ENCODE measurements at regions of chr17 and their contacts with region 1.

Region 1: GRCh38 chr17:27578718-27579085 is 52.3 kb upstream of the LGALS9 start:
- DNase-seq: peak in 1 of 2 donors; percentile 65
- ATAC-seq: peak; percentile 18 to 24
- H3K4me3 ChIP-seq: peak overlapping the region in 2 of 4 donors; percentile 4 to 37
- H3K27ac ChIP-seq: peak overlapping the region; percentile 88 to 99 (median 96)
- H3K4me1 ChIP-seq: peaks cover 41 to 73% of the 10 kb centered on the region in 2 donors
- H3K27me3 ChIP-seq: no peaks in the 10 kb centered on the region
- CTCF ChIP-seq: no peak
- POLR2A ChIP-seq: no peak

Region 2: DNA sequence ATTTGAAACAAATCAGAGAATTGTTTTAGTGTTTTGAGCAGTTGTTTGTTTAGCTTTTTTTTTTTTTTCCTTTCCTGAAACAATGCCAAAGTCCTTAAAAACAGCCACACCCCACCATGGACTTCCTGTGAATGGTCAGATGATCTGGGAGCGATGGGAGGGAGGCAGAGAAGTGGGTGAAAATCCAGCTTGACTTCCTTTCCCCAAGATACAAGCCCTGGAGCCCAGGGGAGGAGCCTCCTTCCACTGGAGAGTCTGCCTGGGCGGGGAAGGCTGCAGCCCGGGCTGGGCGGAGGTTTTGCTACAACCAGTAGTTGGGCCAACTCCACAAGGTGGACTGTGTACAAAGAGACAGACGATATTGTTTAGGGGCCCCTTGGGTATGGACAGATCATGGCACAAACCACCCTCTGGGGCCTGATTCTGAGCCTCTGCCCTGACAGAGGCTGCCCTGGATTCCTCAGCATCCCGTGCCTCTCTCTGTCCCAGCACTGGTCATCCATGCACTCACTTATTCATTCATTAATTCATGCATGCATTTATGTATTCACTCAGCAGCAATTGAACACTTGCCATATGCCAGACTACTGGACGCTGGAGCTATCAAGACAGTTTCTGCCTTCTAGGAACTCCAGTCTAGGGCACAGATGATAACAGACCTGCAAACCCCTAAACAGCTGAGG is 255.0 kb before region 1 on chr17:
- in situ Hi-C with region 1: no loop called
- intact Hi-C with region 1: loop called (anchors 2 kb)
- DNase-seq: peak; percentile 28 to 65
- ATAC-seq: no peak
- H3K4me3 ChIP-seq: no peak overlapping the region
- H3K27ac ChIP-seq: peak overlapping the region; percentile 35 to 53 (median 44)
- H3K4me1 ChIP-seq: peaks cover 31 to 38% of the 10 kb centered on the region in 2 donors
- H3K27me3 ChIP-seq: no peaks in the 10 kb centered on the region
- CTCF ChIP-seq: no peak
- POLR2A ChIP-seq: no peak

Region 3: DNA sequence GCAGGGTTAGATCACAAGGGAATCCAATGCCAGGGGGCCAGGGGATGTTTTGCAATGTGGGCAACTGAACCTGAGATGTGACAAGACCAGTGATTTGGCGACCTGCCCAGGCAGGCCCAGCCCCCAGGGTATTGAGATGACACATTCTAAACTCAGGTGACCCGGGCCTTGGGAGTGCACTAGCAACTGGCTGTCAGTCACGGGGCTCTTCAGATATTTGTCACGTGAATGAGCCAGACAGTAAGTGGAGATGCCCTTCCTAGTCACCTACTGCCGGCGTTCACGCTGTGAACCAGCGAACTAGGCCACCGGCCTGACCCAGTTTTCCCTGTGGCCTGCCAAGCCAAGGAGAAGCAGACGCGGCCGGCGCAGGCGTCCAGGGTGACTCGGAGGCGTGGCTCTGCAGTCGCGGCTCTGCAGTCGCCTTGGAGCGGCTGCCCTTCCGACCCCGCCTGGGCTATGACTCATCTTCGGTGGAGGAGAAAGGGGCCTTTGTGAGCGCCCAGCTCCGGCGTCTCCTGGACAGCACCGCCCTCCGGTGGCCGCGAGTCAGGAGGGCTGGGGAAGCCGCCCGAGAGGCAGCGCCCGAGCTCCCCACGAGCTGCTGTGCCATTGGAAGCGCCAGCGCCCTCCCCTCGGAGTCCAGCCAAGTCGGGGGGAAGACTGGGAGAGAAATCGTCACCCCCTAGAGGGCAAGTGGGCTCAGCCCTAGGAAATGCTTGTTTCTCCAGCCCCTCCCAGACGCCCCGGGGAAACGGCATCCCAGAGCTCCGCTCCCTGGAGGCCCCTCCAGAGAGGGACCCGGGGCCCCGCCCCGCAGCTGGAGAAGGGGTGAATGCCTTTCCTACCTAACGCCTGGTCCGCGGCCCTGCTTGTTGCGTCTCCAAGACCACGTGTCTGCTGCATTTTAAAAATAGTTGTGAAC is 246.0 kb before region 1 on chr17:
- in situ Hi-C with region 1: no loop called
- intact Hi-C with region 1: loop called (anchors 1 kb)
- DNase-seq: peak; percentile 97 to 99
- ATAC-seq: peak; percentile 89 to 91
- H3K4me3 ChIP-seq: peak overlapping the region; percentile 48 to 57 (median 52)
- H3K27ac ChIP-seq: peak overlapping the region; percentile 89 to 95 (median 94)
- H3K4me1 ChIP-seq: peaks cover 16 to 17% of the 10 kb centered on the region in 2 donors
- H3K27me3 ChIP-seq: no peaks in the 10 kb centered on the region
- CTCF ChIP-seq: peak; percentile 93 to 97 (median 94)
- POLR2A ChIP-seq: peak; percentile 36 to 56

Region 4: GRCh38 chr17:27423651-27424050 is 155.1 kb before region 1 on chr17:
- in situ Hi-C with region 1: no loop called
- intact Hi-C with region 1: no loop called
- DNase-seq: no peak
- ATAC-seq: no peak
- H3K4me3 ChIP-seq: no peak overlapping the region
- H3K27ac ChIP-seq: no peak overlapping the region
- H3K4me1 ChIP-seq: no peaks in the 10 kb centered on the region
- H3K27me3 ChIP-seq: no peaks in the 10 kb centered on the region
- CTCF ChIP-seq: no peak
- POLR2A ChIP-seq: no peak

Region 5: DNA sequence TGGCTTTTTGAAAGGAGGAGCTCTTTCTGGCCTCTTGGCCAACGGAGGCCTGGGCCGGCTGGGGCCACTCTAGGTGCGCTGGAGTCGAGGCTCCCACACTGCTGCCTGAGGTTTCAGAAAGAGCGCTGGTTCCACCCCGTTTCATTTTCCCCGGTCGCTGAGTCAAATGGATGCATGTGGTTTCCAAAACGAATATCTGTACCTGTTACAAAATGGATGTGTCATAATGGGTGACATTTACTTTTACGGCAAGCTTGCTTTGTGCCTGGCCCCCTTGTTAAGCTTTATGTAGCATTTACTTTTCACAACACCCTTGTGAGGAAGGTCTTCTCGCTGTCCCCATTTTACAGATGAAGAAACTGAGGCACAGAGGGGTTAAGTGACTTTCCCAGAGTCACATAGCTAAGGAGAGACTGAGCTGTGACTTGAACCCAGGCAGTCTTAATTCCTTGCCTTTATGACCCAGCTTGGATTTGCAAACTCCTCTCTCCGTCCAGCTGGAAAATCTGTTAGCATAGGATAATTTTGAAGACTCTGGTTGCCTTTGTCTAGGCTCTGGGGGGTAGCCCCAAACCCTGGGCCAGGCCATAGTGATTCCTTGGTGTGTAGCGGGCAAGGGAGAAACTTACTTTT is 111.8 kb before region 1 on chr17:
- in situ Hi-C with region 1: no loop called
- intact Hi-C with region 1: no loop called
- DNase-seq: no peak
- ATAC-seq: no peak
- H3K4me3 ChIP-seq: no peak overlapping the region
- H3K27ac ChIP-seq: peak overlapping the region in 2 of 4 donors; percentile 22
- H3K4me1 ChIP-seq: no peaks in the 10 kb centered on the region
- H3K27me3 ChIP-seq: no peaks in the 10 kb centered on the region
- CTCF ChIP-seq: no peak
- POLR2A ChIP-seq: no peak

Region 6: GRCh38 chr17:27494192-27495091 is 84.3 kb before region 1 on chr17:
- in situ Hi-C with region 1: loop called in 1 of 4 experiments (anchors 25 kb)
- intact Hi-C with region 1: no loop called
- DNase-seq: peak; percentile 34 to 73
- ATAC-seq: peak; percentile 73 to 84
- H3K4me3 ChIP-seq: peak overlapping the region; percentile 12 to 36 (median 18)
- H3K27ac ChIP-seq: peak overlapping the region; percentile 5 to 27 (median 13)
- H3K4me1 ChIP-seq: peaks cover 18% of the 10 kb centered on the region in 2 donors
- H3K27me3 ChIP-seq: no peaks in the 10 kb centered on the region
- CTCF ChIP-seq: peak; percentile 33 to 63 (median 44)
- POLR2A ChIP-seq: no peak

Region 7: DNA sequence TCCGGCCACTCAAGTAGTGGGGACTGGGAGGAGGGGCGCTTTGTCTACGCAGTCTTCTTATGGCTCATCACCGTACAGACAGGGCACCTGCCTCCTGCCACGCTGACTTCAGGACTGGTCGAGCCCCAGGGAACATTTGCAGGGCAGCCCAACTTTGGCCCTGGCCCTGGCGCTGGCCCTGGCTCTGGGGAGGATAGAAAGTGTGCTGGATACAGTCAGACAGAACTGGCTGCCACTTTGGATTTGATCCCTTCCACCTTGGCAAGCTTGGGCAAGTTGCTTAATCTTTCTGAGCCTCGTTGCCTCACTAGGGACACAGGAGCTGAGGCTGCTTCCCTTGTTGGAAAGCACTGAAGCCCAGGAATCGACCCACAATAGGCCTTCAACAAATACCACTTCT is 65.9 kb after region 1 on chr17:
- in situ Hi-C with region 1: no loop called
- intact Hi-C with region 1: loop called (anchors 5 kb)
- DNase-seq: peak; percentile 80 to 91
- ATAC-seq: peak; percentile 97
- H3K4me3 ChIP-seq: no peak overlapping the region
- H3K27ac ChIP-seq: peak overlapping the region; percentile 66 to 85 (median 76)
- H3K4me1 ChIP-seq: peaks cover 15 to 22% of the 10 kb centered on the region in 2 donors
- H3K27me3 ChIP-seq: no peaks in the 10 kb centered on the region
- CTCF ChIP-seq: no peak
- POLR2A ChIP-seq: no peak

Measured in gastrocnemius medialis (tissue), 4 donors.